Prostate gland (tissue), 2 donors: ENCODE measurements at regions of chr15 and their contacts with region 1.

Region 1: GRCh38 chr15:87129916-87130315 is 1050.2 kb downstream of the AGBL1 start:
- DNase-seq: no peak
- H3K4me3 ChIP-seq: no peak overlapping the region
- H3K27ac ChIP-seq: no peak overlapping the region
- H3K4me1 ChIP-seq: no peaks in the 10 kb centered on the region
- H3K27me3 ChIP-seq: no peaks in the 10 kb centered on the region
- CTCF ChIP-seq: no peak
- POLR2A ChIP-seq: no peak

Region 2: DNA sequence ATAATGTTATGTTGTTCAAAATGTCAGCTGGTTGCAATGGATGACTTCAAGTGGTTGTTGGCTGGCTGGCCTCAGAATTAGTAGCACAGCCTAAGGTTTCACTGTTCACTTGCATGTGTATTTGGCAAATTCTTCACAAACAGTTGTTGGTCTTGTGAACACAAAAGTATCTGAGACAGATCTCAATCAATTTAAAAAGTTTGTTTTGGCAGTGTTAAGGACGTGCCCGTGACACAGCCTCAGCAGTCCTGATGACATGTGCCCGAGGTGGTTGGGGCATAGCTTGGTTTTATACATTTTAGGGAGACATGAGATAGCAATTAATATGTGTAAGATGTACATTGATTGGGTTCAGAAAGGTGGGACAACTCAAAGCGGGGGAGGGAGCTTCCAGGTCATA is 614.3 kb before region 1 on chr15:
- intact Hi-C with region 1: no loop called
- DNase-seq: peak; percentile 52
- H3K4me3 ChIP-seq: no peak overlapping the region
- H3K27ac ChIP-seq: peak overlapping the region; percentile 0 to 39
- H3K4me1 ChIP-seq: no peaks in the 10 kb centered on the region
- H3K27me3 ChIP-seq: no peaks in the 10 kb centered on the region
- CTCF ChIP-seq: no peak
- POLR2A ChIP-seq: no peak

Region 3: GRCh38 chr15:87021751-87022150 is 108.2 kb before region 1 on chr15:
- intact Hi-C with region 1: no loop called
- DNase-seq: no peak
- H3K4me3 ChIP-seq: no peak overlapping the region
- H3K27ac ChIP-seq: no peak overlapping the region
- H3K4me1 ChIP-seq: no peaks in the 10 kb centered on the region
- H3K27me3 ChIP-seq: no peaks in the 10 kb centered on the region
- CTCF ChIP-seq: no peak
- POLR2A ChIP-seq: no peak

Region 4: GRCh38 chr15:87115795-87116194 is 14.1 kb before region 1 on chr15:
- intact Hi-C with region 1: loop called (anchors 2 kb)
- DNase-seq: no peak
- H3K4me3 ChIP-seq: no peak overlapping the region
- H3K27ac ChIP-seq: no peak overlapping the region
- H3K4me1 ChIP-seq: no peaks in the 10 kb centered on the region
- H3K27me3 ChIP-seq: no peaks in the 10 kb centered on the region
- CTCF ChIP-seq: no peak
- POLR2A ChIP-seq: no peak